ENCODE measurements at regions of chr1 and their contacts with region 1.

Region 1: GRCh38 chr1:88998716-88999115 is 6.3 kb upstream of the KYAT3 start:
- DNase-seq: peak; percentile 53
- H3K4me3 ChIP-seq: no peak overlapping the region
- H3K27ac ChIP-seq: no peak overlapping the region
- H3K4me1 ChIP-seq: peaks cover under 1 to 5% of the 10 kb centered on the region in 2 experiments; a peak in 2 of 4 replicates
- H3K27me3 ChIP-seq: no peaks in the 10 kb centered on the region
- CTCF ChIP-seq: peak; percentile 61
- EP300 ChIP-seq: no peak
- RAD21 ChIP-seq: peak; percentile 83

Region 2: DNA sequence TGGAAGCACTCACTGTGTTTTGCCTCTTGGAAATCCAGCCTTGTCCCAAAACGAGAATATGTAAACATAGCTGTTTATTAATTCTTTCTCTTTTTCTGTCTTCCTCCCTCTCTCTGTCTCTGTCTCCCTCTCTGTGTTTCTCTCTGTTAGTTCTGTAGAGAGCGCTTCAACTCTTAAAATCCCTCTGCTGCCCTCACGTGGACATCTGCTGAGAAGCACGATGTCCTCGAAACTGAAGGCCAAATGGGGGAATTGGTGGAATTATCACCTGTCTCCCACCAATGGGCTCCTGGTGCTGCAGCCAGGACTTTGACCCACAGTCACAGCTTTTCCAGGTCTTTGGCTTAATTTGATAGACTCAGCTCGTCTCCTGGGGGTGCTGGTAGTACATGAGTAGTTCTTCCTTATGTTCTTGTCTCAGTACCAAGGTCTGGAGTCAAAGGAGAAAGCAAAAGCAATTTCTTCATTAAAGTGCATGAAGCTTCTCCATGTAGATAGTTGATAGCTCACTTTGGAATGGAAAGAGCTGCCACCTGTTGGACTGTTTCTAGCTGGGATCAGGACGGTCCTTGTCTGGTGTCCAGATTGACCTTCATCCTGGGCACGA is 359.7 kb after region 1 on chr1:
- CTCF ChIA-PET with region 1: interaction called, 18 read pairs
- POLR2A ChIA-PET with region 1: no interaction called
- DNase-seq: peak; percentile 57
- H3K4me3 ChIP-seq: no peak overlapping the region
- H3K27ac ChIP-seq: no peak overlapping the region
- H3K4me1 ChIP-seq: peaks cover 0 to 1% of the 10 kb centered on the region in 2 experiments; a peak in 2 of 4 replicates
- H3K27me3 ChIP-seq: no peaks in the 10 kb centered on the region
- CTCF ChIP-seq: peak; percentile 82
- EP300 ChIP-seq: 0 out of 4 replicates have a peak, but pooled peaks of 1 of the 2 experiments have one; percentile 4
- RAD21 ChIP-seq: peak; percentile 91

Region 3: DNA sequence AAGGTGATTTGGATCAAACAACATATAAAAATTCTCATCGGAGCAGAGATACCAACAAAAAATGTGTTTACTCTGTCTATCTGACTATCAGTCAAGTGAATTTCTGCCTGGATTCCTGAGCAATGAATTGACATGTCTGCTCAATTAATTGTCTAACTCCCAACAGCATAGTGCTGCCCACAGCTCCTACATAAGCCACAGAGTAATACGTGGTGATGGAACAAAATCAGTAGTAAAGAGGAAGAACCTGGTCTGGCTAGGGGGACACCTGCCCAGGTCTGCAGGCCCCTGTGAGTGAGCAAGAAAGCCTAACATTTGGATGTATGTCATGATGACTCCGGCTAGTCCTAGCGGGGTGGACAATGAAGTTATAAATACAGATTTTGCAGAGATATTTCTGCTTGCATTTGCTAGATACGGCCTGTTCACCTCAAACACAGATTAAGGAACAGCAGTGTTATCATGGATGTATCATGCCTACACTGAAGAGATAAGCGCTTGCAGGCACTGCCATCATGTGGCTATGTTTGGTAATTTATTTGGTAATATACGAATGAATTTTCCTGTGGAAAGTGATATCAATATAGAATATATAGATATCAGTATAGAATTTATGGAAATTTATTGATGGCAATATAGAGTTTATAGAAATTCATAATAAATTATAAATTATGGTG is 456.3 kb after region 1 on chr1:
- CTCF ChIA-PET with region 1: interaction called, 25 read pairs
- POLR2A ChIA-PET with region 1: no interaction called
- DNase-seq: peak; percentile 61
- H3K4me3 ChIP-seq: no peak overlapping the region
- H3K27ac ChIP-seq: no peak overlapping the region
- H3K4me1 ChIP-seq: peaks cover 0 to 2% of the 10 kb centered on the region in 2 experiments; a peak in 1 of 4 replicates
- H3K27me3 ChIP-seq: no peaks in the 10 kb centered on the region
- CTCF ChIP-seq: peak; percentile 74
- EP300 ChIP-seq: no peak
- RAD21 ChIP-seq: peak; percentile 93